Naive thymus-derived CD4-positive, alpha-beta T cell (primary cell): ENCODE measurements at regions of chr5 and their contacts with region 1.

Region 1: GRCh38 chr5:92309336-92309991 is 926.3 kb upstream of the ARRDC3 start:
- DNase-seq: no peak
- ATAC-seq: no peak
- H3K4me3 ChIP-seq: no peak overlapping the region
- H3K4me3 Mint-ChIP-seq: no peak overlapping the region
- H3K27ac ChIP-seq: no peak overlapping the region
- H3K27ac Mint-ChIP-seq: no peak overlapping the region
- H3K4me1 ChIP-seq: no peaks in the 10 kb centered on the region
- H3K4me1 Mint-ChIP-seq: no peaks in the 10 kb centered on the region
- H3K27me3 ChIP-seq: no peaks in the 10 kb centered on the region
- H3K27me3 Mint-ChIP-seq: no peaks in the 10 kb centered on the region

Region 2: DNA sequence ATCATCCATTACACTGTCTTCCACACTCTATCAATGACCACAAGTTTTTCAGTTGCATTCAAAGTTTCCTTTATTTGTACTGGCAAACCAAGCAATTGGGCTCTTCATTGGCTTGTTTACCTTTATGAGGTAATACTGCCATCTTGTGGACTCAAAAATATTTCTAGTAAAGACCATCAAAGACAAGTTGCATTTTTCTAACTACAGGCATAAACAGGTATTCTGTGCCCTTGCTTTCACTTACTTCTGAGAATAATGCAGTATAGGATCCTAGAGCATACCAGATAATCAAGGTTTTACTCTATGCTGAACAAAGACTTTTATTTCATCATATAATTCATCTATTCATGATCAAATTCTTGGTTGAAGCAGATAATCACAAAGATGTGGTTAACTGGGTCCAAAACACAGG is 1605.7 kb after region 1 on chr5:
- CTCF ChIA-PET with region 1: no interaction called
- POLR2A ChIA-PET with region 1: no interaction called
- intact Hi-C with region 1: loop called in 1 of 2 experiments (anchors 5 kb)
- DNase-seq: peak in 6 of 9 donors; percentile 4 to 46 (median 29)
- ATAC-seq: peak; percentile 54
- H3K4me3 ChIP-seq: no peak overlapping the region
- H3K4me3 Mint-ChIP-seq: no peak overlapping the region
- H3K27ac ChIP-seq: no peak overlapping the region
- H3K27ac Mint-ChIP-seq: no peak overlapping the region
- H3K4me1 ChIP-seq: no peaks in the 10 kb centered on the region
- H3K4me1 Mint-ChIP-seq: peaks cover 0 to 5% (median 0%) of the 10 kb centered on the region in 7 donors
- H3K27me3 ChIP-seq: no peaks in the 10 kb centered on the region
- H3K27me3 Mint-ChIP-seq: peaks cover 0 to 2% (median 0%) of the 10 kb centered on the region in 5 donors